CD4-positive, alpha-beta T cell (primary cell): ENCODE measurements at regions of chr1 and their contacts with region 1.

Region 1: GRCh38 chr1:24930204-24931145 is at the start of gene RUNX3:
- DNase-seq: peak; percentile 83 to 97 (median 92)
- ATAC-seq: peak; percentile 81
- H3K4me3 ChIP-seq: peak within 1 kb of the TSS; percentile 83
- H3K4me3 Mint-ChIP-seq: peak within 1 kb of the TSS; percentile 99
- H3K27ac ChIP-seq: peak within 1 kb of the TSS; percentile 91 to 95
- H3K27ac Mint-ChIP-seq: peak within 1 kb of the TSS; percentile 98
- H3K4me1 ChIP-seq: peaks cover 67% of the 10 kb centered on the region
- H3K4me1 Mint-ChIP-seq: peaks cover 61% of the 10 kb centered on the region
- H3K27me3 ChIP-seq: no peaks in the 10 kb centered on the region
- H3K27me3 Mint-ChIP-seq: no peaks in the 10 kb centered on the region
- CTCF ChIP-seq: peak; percentile 14
- total RNA-seq, gene RUNX3: 202 to 209 TPM

Region 2: GRCh38 chr1:24683713-24684162 is 246.7 kb before region 1 on chr1:
- CTCF ChIA-PET with region 1: no interaction called
- POLR2A ChIA-PET with region 1: no interaction called
- intact Hi-C with region 1: no loop called
- DNase-seq: no peak
- ATAC-seq: no peak
- H3K4me3 ChIP-seq: no peak overlapping the region
- H3K4me3 Mint-ChIP-seq: no peak overlapping the region
- H3K27ac ChIP-seq: no peak overlapping the region
- H3K27ac Mint-ChIP-seq: no peak overlapping the region
- H3K4me1 ChIP-seq: no peaks in the 10 kb centered on the region
- H3K4me1 Mint-ChIP-seq: no peaks in the 10 kb centered on the region
- H3K27me3 ChIP-seq: no peaks in the 10 kb centered on the region
- H3K27me3 Mint-ChIP-seq: no peaks in the 10 kb centered on the region
- CTCF ChIP-seq: no peak

Region 3: DNA sequence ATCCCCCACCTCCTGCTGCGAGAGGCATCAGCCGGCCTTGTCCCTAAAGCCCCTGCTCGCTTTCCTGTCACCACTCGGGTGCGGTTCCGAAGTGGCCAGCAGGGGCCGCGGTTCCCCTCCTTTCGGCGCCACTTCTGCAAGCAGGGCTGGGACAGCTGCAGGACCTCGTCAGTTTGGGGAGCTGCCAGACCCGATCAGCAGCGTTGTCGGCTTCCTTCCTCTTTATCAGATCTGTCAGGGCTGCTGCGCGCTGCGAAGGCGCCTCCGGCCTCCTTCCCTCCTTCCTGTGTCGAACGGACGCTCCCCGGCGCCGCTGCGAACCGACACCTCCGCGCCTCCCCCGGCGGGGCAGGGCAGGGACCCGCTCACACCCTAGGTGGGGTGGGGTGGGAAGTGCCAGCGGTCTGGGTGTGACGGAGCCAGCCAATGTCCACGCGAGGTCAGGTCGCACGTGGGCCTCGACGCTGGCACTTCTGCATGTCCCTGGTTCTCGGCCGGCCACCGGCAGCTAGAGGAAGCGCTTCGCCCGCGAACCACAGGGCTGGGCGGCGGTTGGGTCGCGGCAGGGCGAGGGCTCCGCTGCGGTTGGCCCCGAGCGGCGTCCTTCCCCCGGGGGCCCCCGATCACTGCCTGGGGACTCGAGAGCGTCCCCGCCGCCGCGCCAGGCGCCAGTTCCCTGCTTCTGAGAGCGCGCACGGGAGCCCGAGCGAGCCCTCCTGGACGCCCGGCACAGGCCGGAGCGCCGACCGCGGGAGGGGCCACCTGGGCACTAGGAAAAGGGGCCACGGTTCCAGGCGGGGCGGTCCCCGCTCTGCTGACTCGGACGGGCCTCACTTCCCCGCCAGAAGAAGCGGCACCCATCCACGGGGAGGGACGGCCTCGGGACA is 82.2 kb before region 1 on chr1:
- CTCF ChIA-PET with region 1: interaction called, 10 read pairs
- POLR2A ChIA-PET with region 1: interaction called, 27 read pairs
- intact Hi-C with region 1: loop called (anchors 1 kb)
- DNase-seq: peak; percentile 80 to 95 (median 88)
- ATAC-seq: peak; percentile 93
- H3K4me3 ChIP-seq: peak overlapping the region; percentile 57
- H3K4me3 Mint-ChIP-seq: peak overlapping the region; percentile 74
- H3K27ac ChIP-seq: peak overlapping the region; percentile 13 to 55
- H3K27ac Mint-ChIP-seq: no peak overlapping the region
- H3K4me1 ChIP-seq: peaks cover 25% of the 10 kb centered on the region
- H3K4me1 Mint-ChIP-seq: peaks cover 9% of the 10 kb centered on the region
- H3K27me3 ChIP-seq: no peaks in the 10 kb centered on the region
- H3K27me3 Mint-ChIP-seq: no peaks in the 10 kb centered on the region
- CTCF ChIP-seq: peak; percentile 89

Region 4: DNA sequence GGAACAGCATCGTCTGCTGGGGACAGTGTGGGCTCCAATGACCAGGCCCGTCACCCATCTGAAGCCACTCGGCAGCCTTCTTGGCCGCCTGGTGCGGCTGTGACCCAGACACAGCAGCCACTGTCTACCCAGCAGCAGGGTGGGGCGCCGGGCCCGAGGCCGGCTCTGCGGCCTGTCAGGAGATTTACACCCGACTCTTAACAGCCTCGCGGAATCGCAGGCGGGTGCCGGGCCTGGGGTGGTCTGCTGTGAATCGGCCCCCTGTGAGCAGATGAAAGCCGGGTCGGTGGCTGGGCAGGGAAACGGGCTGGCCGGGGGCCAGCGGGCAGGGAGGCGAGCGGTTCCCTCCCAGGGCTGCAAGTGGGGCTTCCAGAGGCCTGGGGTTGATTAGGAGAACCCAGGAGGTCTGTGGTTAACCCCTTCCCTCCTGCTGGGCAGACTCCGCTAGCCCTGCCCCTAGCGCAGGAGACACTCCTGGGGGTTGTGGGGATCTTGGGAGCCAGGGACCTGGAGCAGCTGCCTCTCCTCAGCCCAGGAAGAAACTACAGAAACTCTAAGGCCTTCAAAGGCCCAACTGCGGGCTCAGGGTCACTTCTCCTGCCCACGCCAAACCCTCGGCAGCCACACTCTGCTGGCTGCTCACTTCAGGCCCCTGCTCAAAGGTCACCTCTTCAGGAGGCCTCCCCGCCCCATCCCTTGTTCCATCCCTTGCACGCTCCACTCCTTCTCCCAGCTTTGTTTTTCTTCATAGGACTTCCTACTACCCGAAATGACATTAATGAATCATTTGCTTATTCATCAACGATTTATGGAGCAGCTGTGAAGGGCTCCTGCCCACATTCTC is 16.0 kb before region 1 on chr1:
- CTCF ChIA-PET with region 1: interaction called, 5 read pairs
- POLR2A ChIA-PET with region 1: interaction called, 121 read pairs
- intact Hi-C with region 1: loop called in 1 of 2 experiments (anchors 2 kb)
- DNase-seq: no peak
- ATAC-seq: no peak
- H3K4me3 ChIP-seq: no peak overlapping the region
- H3K4me3 Mint-ChIP-seq: no peak overlapping the region
- H3K27ac ChIP-seq: peak overlapping the region in 1 of 2 donors; percentile 9
- H3K27ac Mint-ChIP-seq: peak overlapping the region; percentile 69
- H3K4me1 ChIP-seq: peaks cover 100% of the 10 kb centered on the region
- H3K4me1 Mint-ChIP-seq: peaks cover 43% of the 10 kb centered on the region
- H3K27me3 ChIP-seq: no peaks in the 10 kb centered on the region
- H3K27me3 Mint-ChIP-seq: no peaks in the 10 kb centered on the region
- CTCF ChIP-seq: no peak

Region 5: GRCh38 chr1:25022361-25023189 is 92.1 kb after region 1 on chr1:
- CTCF ChIA-PET with region 1: interaction called, 7 read pairs
- POLR2A ChIA-PET with region 1: interaction called, 69 read pairs
- intact Hi-C with region 1: no loop called
- DNase-seq: peak; percentile 82 to 99 (median 95)
- ATAC-seq: peak; percentile 84
- H3K4me3 ChIP-seq: peak overlapping the region; percentile 37
- H3K4me3 Mint-ChIP-seq: peak overlapping the region; percentile 61
- H3K27ac ChIP-seq: peak overlapping the region; percentile 97 to 99
- H3K27ac Mint-ChIP-seq: peak overlapping the region; percentile 91
- H3K4me1 ChIP-seq: peaks cover 98% of the 10 kb centered on the region
- H3K4me1 Mint-ChIP-seq: peaks cover 72% of the 10 kb centered on the region
- H3K27me3 ChIP-seq: no peaks in the 10 kb centered on the region
- H3K27me3 Mint-ChIP-seq: no peaks in the 10 kb centered on the region
- CTCF ChIP-seq: no peak

Region 6: GRCh38 chr1:25099343-25099951 is 169.0 kb after region 1 on chr1:
- CTCF ChIA-PET with region 1: interaction called, 10 read pairs
- POLR2A ChIA-PET with region 1: interaction called, 6 read pairs
- intact Hi-C with region 1: loop called (anchors 1 kb)
- DNase-seq: peak in 8 of 14 experiments; percentile 6 to 74 (median 34)
- ATAC-seq: peak; percentile 55
- H3K4me3 ChIP-seq: no peak overlapping the region
- H3K4me3 Mint-ChIP-seq: peak overlapping the region; percentile 5
- H3K27ac ChIP-seq: no peak overlapping the region
- H3K27ac Mint-ChIP-seq: peak overlapping the region; percentile 24
- H3K4me1 ChIP-seq: peaks cover 66% of the 10 kb centered on the region
- H3K4me1 Mint-ChIP-seq: peaks cover 66% of the 10 kb centered on the region
- H3K27me3 ChIP-seq: no peaks in the 10 kb centered on the region
- H3K27me3 Mint-ChIP-seq: no peaks in the 10 kb centered on the region
- CTCF ChIP-seq: no peak

Region 7: GRCh38 chr1:25232027-25232865 is 301.8 kb after region 1 on chr1 and contains the start of gene SYF2:
- CTCF ChIA-PET with region 1: no interaction called
- POLR2A ChIA-PET with region 1: interaction called, 19 read pairs
- intact Hi-C with region 1: no loop called
- DNase-seq: peak; percentile 76 to 96 (median 86)
- ATAC-seq: peak; percentile 90
- H3K4me3 ChIP-seq: peak within 1 kb of the TSS; percentile 65
- H3K4me3 Mint-ChIP-seq: no peak within 1 kb of the TSS
- H3K27ac ChIP-seq: peak within 1 kb of the TSS; percentile 85 to 93
- H3K27ac Mint-ChIP-seq: no peak within 1 kb of the TSS
- H3K4me1 ChIP-seq: peaks cover 30% of the 10 kb centered on the region
- H3K4me1 Mint-ChIP-seq: peaks cover 27% of the 10 kb centered on the region
- H3K27me3 ChIP-seq: no peaks in the 10 kb centered on the region
- H3K27me3 Mint-ChIP-seq: no peaks in the 10 kb centered on the region
- CTCF ChIP-seq: no peak
- total RNA-seq, gene SYF2: 93.3 to 98.9 TPM